ENCODE measurements at regions of chr12 and their contacts with region 1.

Region 1: GRCh38 chr12:114993165-114993564 is 309.2 kb upstream of the TBX3 start:
- DNase-seq: no peak

Region 2: DNA sequence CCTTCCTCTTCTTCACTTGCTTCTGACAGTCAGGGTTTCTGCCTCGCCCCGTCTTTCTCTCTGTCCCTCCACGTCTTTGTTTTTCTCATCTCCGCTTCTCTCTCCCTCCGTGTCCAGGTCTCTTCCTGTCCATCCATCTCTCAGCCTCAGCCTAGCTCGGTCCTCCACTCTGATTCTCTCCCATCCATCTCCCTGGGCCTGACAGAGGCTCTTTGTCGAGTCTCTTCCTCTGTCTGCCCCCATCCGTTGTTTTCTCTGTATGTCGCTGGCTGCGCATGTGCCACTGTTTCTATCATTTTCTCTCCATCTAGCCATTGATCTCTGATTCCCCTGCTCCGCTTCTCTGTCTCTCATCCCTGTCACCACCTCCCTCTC is 19.7 kb after region 1 on chr12:
- intact Hi-C with region 1: loop called in 1 of 2 experiments (anchors 1 kb)
- DNase-seq: no peak